A549 (cell line): ENCODE measurements at regions of chr17 and their contacts with region 1.

Region 1: DNA sequence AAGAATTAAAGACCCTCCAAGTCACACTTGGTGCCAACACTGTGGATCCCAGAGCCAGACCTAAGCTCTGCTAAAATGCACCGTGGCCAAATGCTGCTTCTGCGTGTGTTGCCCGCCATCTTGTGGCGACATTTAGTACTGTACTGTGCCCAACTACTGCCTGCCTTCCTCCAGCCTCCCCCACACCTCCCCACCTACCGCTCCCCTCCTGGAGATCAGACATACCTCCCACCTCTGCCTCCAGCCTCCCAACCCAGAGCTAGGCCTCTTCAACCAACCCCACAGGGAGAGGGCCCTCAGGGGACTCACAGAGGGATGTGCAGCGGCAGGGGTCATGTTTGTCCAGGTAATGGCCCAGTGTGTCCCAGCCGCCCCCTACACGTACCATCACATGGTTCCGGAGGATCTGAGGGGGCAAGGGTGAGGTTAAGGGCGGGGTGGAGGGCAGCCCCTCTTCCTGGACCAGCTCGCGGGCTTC is 5.5 kb downstream of the GAS2L2 start:
- DNase-seq: peak; percentile 86 to 95
- ATAC-seq: peak; percentile 71 to 91
- H3K4me3 ChIP-seq: no peak overlapping the region
- H3K27ac ChIP-seq: no peak overlapping the region
- H3K4me1 ChIP-seq: peaks cover 12% of the 10 kb centered on the region; the same call in 2 of the 3 replicates
- CTCF ChIP-seq: peak; percentile 96
- EP300 ChIP-seq: no peak
- POLR2A ChIP-seq: no peak
- RAD21 ChIP-seq: peak; percentile 97 to 99

Region 2: GRCh38 chr17:35540589-35541404 is 206.8 kb before region 1 on chr17:
- CTCF ChIA-PET with region 1: interaction called, 32 read pairs
- POLR2A ChIA-PET with region 1: no interaction called
- DNase-seq: no peak
- ATAC-seq: peak; percentile 25 to 42; a peak in 3 of 6 replicates
- H3K4me3 ChIP-seq: 0 out of 3 replicates have a peak overlapping the region, but pooled peaks have one; percentile 5
- H3K27ac ChIP-seq: peak overlapping the region; percentile 26 to 56; a peak in 5 of 6 replicates
- H3K4me1 ChIP-seq: no peaks in the 10 kb centered on the region
- CTCF ChIP-seq: no peak
- EP300 ChIP-seq: no peak
- POLR2A ChIP-seq: no peak
- RAD21 ChIP-seq: no peak

Region 3: GRCh38 chr17:35596530-35597233 is 150.9 kb before region 1 on chr17:
- CTCF ChIA-PET with region 1: interaction called, 71 read pairs
- POLR2A ChIA-PET with region 1: no interaction called
- DNase-seq: no peak
- ATAC-seq: peak; percentile 24 to 67; a peak in 4 of 6 replicates
- H3K4me3 ChIP-seq: no peak overlapping the region
- H3K27ac ChIP-seq: no peak overlapping the region
- H3K4me1 ChIP-seq: peaks cover 5% of the 10 kb centered on the region; the same call in 2 of the 3 replicates
- CTCF ChIP-seq: no peak
- EP300 ChIP-seq: no peak
- POLR2A ChIP-seq: no peak
- RAD21 ChIP-seq: no peak

Region 4: DNA sequence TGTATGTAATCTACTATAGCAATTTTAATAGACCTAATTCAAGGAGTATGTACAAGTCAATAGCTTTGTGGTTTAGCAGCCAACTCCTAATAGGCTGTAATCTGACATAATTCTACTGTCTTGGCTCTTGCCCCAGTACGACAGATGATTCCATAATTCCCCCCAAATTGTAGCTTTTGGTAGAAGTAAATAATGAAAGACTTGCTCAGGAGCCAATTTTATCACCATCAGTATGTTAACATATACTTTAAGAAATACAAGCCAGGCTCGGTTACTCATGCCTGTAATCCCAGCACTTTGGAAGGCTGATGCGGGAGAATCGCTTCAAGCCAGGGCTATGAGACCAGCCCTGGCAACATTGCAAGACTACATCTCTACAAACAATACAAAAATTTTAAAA is 106.5 kb before region 1 on chr17:
- CTCF ChIA-PET with region 1: interaction called, 13 read pairs
- POLR2A ChIA-PET with region 1: no interaction called
- DNase-seq: no peak
- ATAC-seq: no peak
- H3K4me3 ChIP-seq: no peak overlapping the region
- H3K27ac ChIP-seq: no peak overlapping the region
- H3K4me1 ChIP-seq: no peaks in the 10 kb centered on the region
- CTCF ChIP-seq: no peak
- EP300 ChIP-seq: no peak
- POLR2A ChIP-seq: no peak
- RAD21 ChIP-seq: no peak

Region 5: DNA sequence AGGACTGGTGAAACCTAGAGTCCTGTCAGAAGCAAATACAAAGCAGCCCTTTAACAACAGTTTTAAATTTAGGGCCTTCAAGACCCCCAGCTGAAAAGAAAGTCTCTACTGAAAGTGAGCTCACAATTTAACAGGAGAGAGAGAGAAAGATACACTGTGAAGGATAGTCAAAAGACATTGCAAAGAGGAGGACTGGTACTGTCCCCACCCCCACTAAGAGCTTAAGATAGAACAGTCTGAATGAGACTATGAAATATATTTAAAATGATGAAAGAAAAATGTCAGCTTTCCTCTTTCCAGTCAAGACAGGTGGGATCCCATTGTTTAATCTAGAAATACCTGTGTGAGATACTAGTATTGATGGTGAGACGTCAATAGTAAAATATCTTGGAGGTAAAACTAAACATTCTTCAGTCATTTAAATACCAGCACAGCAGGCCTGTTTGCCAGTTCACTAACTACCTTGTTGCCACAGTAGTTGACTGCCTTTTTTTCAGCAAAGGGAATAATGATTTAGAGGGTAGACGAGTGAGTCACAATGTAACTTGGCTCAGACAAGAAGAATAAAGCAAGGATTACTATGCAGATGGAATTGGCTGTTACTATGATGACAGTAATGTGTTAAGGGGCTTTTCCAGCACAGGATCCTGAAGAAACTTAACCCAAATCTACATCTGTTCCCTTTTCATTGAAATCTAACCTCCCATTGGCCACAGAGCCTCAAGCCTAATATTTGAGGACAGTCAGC is 63.4 kb before region 1 on chr17:
- CTCF ChIA-PET with region 1: interaction called, 26 read pairs
- POLR2A ChIA-PET with region 1: no interaction called
- DNase-seq: peak in 1 of 2 experiments; percentile 14
- ATAC-seq: no peak; a peak in 1 of 6 replicates
- H3K4me3 ChIP-seq: no peak overlapping the region
- H3K27ac ChIP-seq: no peak overlapping the region
- H3K4me1 ChIP-seq: peaks cover 13% of the 10 kb centered on the region; the same call in 1 of the 3 replicates
- CTCF ChIP-seq: no peak
- EP300 ChIP-seq: no peak
- POLR2A ChIP-seq: no peak
- RAD21 ChIP-seq: no peak

Region 6: GRCh38 chr17:35731239-35731931 is 16.2 kb before region 1 on chr17 and contains the start of gene RASL10B:
- CTCF ChIA-PET with region 1: interaction called, 377 read pairs
- POLR2A ChIA-PET with region 1: no interaction called
- DNase-seq: no peak
- ATAC-seq: peak; percentile 37 to 59; a peak in 4 of 6 replicates
- H3K4me3 ChIP-seq: peak within 1 kb of the TSS; percentile 43
- H3K27ac ChIP-seq: peak within 1 kb of the TSS; percentile 31 to 82; a peak in 4 of 6 replicates
- H3K4me1 ChIP-seq: no peaks in the 10 kb centered on the region
- CTCF ChIP-seq: no peak
- EP300 ChIP-seq: no peak
- POLR2A ChIP-seq: no peak
- RAD21 ChIP-seq: no peak
- polyA plus RNA-seq, gene RASL10B: 0.05 and 0.07 TPM in 2 replicates

Region 7: DNA sequence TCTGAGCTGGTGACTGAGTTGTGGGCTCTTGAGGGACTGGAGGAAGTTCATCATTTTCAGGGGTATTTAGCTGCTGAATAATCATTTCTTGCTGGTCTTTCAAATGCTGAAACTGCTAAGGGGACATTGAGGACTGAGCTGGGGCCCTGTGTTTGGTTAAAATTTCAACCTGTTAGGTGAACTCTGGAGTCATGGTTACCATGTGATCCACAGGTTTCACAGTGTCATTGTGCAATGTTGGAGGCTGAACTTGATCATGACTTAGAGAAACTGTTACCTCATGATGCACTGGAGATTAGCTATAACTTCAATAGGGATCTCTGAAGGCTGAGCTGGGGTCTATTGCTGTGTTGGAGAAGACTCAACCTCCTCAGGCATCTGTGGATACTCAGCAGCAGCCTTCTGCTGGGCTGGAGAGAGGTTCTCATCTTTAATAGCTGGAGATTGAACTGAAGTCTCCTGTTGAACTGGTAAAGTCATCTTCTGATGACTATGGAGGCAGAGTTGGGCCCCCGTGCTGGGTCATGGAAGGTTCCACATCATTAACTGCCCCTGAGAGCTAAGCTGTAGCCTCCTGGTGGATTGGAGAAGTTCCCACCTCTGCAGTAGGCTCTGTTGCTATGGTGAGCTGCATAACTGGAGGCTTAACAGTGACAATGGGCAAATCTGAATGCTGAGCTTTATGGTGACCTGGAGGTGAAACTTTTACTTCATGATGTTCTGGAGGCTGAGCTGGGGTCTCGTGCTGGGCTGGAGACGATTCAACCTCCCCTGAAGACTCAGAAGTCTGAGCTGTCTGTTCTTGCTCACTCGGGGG is 167.8 kb after region 1 on chr17:
- CTCF ChIA-PET with region 1: no interaction called
- POLR2A ChIA-PET with region 1: no interaction called
- DNase-seq: no peak
- ATAC-seq: no peak
- H3K4me3 ChIP-seq: no peak overlapping the region
- H3K27ac ChIP-seq: no peak overlapping the region
- H3K4me1 ChIP-seq: no peaks in the 10 kb centered on the region
- CTCF ChIP-seq: no peak
- EP300 ChIP-seq: no peak
- POLR2A ChIP-seq: no peak
- RAD21 ChIP-seq: no peak

Region 8: DNA sequence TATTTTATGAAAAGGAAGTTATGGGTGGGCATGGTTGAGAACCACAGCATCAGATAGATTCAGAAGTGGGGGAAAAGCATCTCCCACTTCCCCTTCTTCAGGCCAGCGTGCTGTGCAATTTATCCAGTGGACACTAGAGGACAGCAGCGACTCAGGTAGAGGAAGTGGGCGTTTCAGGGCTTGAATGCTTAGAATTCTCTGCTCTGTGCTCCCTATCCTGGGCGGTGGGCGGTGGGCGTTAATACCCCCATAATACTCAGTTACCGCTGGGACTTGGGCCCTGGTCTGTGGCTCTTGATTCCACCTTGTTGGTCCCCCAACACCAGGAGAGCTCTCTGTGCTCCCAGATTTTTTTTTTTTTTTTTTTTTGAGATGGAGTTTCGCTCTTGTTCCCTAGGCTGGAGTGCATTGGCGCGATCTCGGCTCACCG is 199.6 kb after region 1 on chr17:
- CTCF ChIA-PET with region 1: no interaction called
- POLR2A ChIA-PET with region 1: no interaction called
- DNase-seq: peak; percentile 57 to 75
- ATAC-seq: peak; percentile 91 to 95
- H3K4me3 ChIP-seq: peak overlapping the region; percentile 42
- H3K27ac ChIP-seq: peak overlapping the region; percentile 49 to 73; a peak in 5 of 6 replicates
- H3K4me1 ChIP-seq: 0 out of 3 replicates have a peak, but pooled peaks cover 4% of the 10 kb centered on the region
- CTCF ChIP-seq: peak; percentile 90
- EP300 ChIP-seq: no peak
- POLR2A ChIP-seq: no peak
- RAD21 ChIP-seq: peak; percentile 84 to 85